ENCODE measurements at regions of chr18 and their contacts with region 1.

Region 1: DNA sequence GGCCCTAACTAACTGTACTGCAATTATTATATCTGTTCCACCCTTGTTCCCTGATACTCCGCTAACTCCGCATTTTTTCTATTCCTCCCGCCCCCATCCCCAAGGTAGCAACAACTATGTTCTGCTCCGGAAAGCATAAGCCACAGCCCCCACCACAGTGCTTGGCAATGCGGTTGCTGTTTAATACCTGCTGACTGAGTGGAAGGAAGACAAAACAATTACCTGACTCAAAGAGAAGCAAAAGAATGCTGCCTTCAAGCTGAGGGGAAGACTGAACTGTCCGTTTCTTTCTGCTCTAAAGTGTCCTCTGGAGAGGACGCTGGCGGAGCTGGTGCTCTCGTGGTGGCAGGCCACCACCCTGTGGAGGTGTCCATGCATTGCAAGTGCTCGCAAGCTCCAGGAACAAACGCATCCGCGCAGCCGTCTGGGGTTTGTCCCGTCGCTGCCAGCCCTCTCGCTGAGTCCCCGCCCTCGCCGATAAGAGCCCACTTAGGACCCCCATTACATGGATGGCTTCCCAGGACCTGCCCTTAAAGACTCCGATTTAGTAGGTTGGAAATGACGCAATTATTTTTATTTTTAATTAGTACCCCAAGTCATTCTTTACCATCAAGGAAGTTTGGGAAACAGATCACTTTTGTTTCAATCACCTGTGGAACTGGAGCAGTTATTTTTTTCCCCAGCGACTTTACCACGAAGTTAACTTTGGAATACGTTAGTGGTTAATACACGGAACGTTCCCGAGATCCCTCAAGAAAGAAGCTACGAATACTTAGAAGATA is 1.6 kb upstream of the MYL12A start:
- DNase-seq: peak; percentile 90
- ATAC-seq: peak; percentile 63
- H3K4me3 Mint-ChIP-seq: peak overlapping the region; percentile 96
- H3K27ac Mint-ChIP-seq: peak overlapping the region; percentile 78
- H3K4me1 Mint-ChIP-seq: peaks cover 29% of the 10 kb centered on the region
- H3K27me3 Mint-ChIP-seq: no peaks in the 10 kb centered on the region
- CTCF ChIP-seq: peak; percentile 64

Region 2: DNA sequence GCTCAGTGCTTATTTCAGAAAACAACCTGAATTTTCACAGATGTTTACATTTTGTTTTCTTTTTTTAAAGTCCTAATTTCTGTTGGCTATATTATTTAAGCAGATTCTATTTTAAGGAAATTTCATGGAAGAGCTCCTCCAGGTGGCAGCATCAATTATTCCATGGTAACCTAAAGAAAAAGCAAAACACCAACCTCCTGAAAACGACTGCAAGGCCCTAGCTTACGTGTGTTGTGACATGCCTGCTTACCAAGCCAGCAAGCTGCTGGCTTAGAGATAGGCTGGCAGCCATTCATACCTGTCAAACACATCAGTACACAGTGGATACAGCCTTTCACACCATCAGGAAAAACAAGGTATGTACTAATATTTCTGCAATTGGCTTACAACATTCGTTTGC is 298.0 kb before region 1 on chr18:
- CTCF ChIA-PET with region 1: interaction called, 19 read pairs
- POLR2A ChIA-PET with region 1: no interaction called
- DNase-seq: no peak
- ATAC-seq: peak; percentile 62
- H3K4me3 Mint-ChIP-seq: no peak overlapping the region
- H3K27ac Mint-ChIP-seq: no peak overlapping the region
- H3K4me1 Mint-ChIP-seq: no peaks in the 10 kb centered on the region
- H3K27me3 Mint-ChIP-seq: no peaks in the 10 kb centered on the region
- CTCF ChIP-seq: no peak

Region 3: DNA sequence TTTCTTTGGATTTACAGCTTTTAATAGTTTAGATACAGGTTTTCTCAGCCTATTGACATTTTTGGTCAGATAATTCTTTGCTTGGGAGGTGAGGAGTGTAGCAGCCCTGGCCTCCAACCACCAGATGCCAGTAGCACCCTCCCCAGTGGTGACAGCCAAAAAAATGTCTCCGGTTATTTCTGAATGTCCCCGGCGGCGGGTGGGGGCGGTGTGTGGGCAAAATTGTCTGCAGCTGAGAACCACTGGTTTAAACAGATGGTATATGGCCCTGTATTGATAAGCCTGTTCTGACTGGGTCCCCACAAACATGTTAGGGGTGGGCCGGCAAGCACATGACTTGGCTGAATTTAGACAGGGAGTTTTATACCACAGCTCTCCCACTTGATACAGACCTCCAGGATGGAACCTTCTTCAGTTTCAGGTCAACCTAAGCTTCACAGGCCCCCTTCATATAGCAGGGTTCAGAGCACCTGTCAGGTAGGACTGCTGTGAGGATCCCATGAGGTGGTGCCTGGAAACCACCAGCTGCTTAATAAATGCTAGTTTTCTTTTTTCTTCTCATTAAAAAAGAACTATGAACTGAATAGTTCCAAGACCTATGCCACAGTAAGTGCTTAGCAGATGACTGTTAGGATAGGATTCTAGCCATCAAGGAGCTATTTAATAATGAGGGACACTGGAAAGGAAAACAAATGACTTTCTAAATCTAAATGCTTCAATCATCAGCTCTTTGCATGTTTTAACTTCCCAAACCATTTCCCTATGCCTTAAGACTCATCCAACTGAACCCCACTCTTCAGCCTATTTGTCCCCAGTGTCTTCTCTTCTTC is 251.2 kb before region 1 on chr18:
- CTCF ChIA-PET with region 1: interaction called, 16 read pairs
- POLR2A ChIA-PET with region 1: no interaction called
- DNase-seq: peak; percentile 40
- ATAC-seq: peak; percentile 68
- H3K4me3 Mint-ChIP-seq: no peak overlapping the region
- H3K27ac Mint-ChIP-seq: no peak overlapping the region
- H3K4me1 Mint-ChIP-seq: peaks cover 25% of the 10 kb centered on the region
- H3K27me3 Mint-ChIP-seq: no peaks in the 10 kb centered on the region
- CTCF ChIP-seq: no peak

Region 4: DNA sequence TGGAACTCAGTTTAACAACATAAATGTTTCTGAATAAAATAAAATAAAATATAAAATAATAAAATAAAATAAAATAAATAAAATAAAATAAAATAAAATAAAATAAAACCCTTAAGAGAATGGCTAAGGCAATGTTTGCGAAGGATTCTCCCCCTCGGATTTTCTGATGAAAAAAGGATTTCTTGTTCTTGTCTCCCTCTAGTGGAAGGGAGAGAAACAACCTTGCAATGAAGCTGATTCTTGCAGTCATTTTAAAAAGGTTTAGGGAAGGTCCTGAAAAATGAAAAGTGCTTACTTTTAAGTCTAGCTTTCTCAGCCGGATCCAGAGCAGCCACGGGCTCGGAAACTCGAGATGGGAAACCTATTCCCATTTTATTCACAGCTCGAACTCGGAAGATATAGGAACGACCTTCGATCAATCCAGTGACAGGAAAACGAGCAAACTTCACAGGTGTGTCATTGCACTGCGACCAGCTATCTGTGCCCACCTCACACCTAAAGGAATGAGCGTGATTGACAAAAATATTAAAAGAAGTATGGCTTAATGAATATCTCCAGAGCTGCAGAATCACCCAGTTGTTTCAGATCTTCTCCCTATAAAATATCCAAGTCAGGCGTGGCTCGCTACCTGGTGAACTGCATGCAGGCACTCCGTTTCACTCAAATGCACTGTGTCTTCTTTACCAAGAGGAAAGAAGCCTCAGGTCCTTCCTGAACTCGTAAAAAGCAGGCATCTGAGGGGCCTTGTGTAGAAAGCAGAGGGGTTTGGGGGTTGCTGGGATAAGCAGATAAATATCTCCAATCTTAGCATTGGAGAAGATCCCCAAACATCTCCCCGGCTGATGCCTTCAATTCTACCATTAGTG is 94.4 kb before region 1 on chr18:
- CTCF ChIA-PET with region 1: interaction called, 21 read pairs
- POLR2A ChIA-PET with region 1: no interaction called
- DNase-seq: no peak
- ATAC-seq: no peak
- H3K4me3 Mint-ChIP-seq: no peak overlapping the region
- H3K27ac Mint-ChIP-seq: no peak overlapping the region
- H3K4me1 Mint-ChIP-seq: no peaks in the 10 kb centered on the region
- H3K27me3 Mint-ChIP-seq: no peaks in the 10 kb centered on the region
- CTCF ChIP-seq: peak; percentile 55

Measured in WTC11 (cell line).